ENCODE measurements at regions of chr5 and their contacts with region 1.

Region 1: GRCh38 chr5:102778478-102778877 is 23.4 kb downstream of the PAM start:
- DNase-seq: no peak
- ATAC-seq: no peak
- H3K4me3 ChIP-seq: no peak overlapping the region
- H3K4me3 Mint-ChIP-seq: no peak overlapping the region
- H3K27ac ChIP-seq: no peak overlapping the region
- H3K27ac Mint-ChIP-seq: peak overlapping the region in 1 of 9 donors; percentile 15
- H3K4me1 ChIP-seq: no peaks in the 10 kb centered on the region
- H3K4me1 Mint-ChIP-seq: peaks cover 0 to 41% (median 15%) of the 10 kb centered on the region in 7 donors
- H3K27me3 ChIP-seq: no peaks in the 10 kb centered on the region
- H3K27me3 Mint-ChIP-seq: no peaks in the 10 kb centered on the region

Region 2: GRCh38 chr5:102755686-102756371 is 22.6 kb before region 1 on chr5:
- CTCF ChIA-PET with region 1: interaction called, 4 read pairs
- POLR2A ChIA-PET with region 1: no interaction called
- intact Hi-C with region 1: loop called in 1 of 2 experiments (anchors 1 kb)
- DNase-seq: peak; percentile 22 to 70 (median 39)
- ATAC-seq: peak; percentile 86
- H3K4me3 ChIP-seq: peak overlapping the region; percentile 83
- H3K4me3 Mint-ChIP-seq: peak overlapping the region; percentile 90 to 99 (median 94)
- H3K27ac ChIP-seq: peak overlapping the region; percentile 64
- H3K27ac Mint-ChIP-seq: peak overlapping the region; percentile 57 to 95 (median 91)
- H3K4me1 ChIP-seq: peaks cover 11 to 16% of the 10 kb centered on the region in 2 donors
- H3K4me1 Mint-ChIP-seq: peaks cover 22 to 45% (median 40%) of the 10 kb centered on the region in 7 donors
- H3K27me3 ChIP-seq: no peaks in the 10 kb centered on the region
- H3K27me3 Mint-ChIP-seq: peaks cover 0 to 15% (median under 1%) of the 10 kb centered on the region in 5 donors

Region 3: DNA sequence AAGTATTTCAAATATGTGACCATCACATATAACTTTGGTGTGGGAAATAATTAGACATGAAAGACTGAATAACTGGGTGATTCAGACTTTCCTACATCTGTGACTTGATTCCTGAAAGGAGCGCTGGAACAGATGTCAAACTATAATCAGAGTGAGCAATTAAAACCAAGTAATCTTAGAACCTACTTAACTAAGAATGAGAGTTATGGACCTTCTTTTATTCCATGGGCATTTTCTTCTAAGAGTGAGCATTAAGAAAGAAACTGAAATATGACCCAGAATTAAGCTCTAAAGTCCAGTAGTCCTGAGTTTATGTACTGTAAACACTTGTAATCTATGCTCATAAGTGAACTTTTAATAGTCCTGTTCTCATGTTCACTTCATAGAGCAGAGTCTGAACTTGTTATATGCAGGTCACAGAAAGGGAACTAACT is 45.0 kb after region 1 on chr5:
- CTCF ChIA-PET with region 1: no interaction called
- POLR2A ChIA-PET with region 1: no interaction called
- intact Hi-C with region 1: no loop called
- DNase-seq: no peak
- ATAC-seq: no peak
- H3K4me3 ChIP-seq: no peak overlapping the region
- H3K4me3 Mint-ChIP-seq: no peak overlapping the region
- H3K27ac ChIP-seq: no peak overlapping the region
- H3K27ac Mint-ChIP-seq: no peak overlapping the region
- H3K4me1 ChIP-seq: no peaks in the 10 kb centered on the region
- H3K4me1 Mint-ChIP-seq: peaks cover 4 to 11% (median 5%) of the 10 kb centered on the region in 7 donors
- H3K27me3 ChIP-seq: no peaks in the 10 kb centered on the region
- H3K27me3 Mint-ChIP-seq: no peaks in the 10 kb centered on the region

Region 4: DNA sequence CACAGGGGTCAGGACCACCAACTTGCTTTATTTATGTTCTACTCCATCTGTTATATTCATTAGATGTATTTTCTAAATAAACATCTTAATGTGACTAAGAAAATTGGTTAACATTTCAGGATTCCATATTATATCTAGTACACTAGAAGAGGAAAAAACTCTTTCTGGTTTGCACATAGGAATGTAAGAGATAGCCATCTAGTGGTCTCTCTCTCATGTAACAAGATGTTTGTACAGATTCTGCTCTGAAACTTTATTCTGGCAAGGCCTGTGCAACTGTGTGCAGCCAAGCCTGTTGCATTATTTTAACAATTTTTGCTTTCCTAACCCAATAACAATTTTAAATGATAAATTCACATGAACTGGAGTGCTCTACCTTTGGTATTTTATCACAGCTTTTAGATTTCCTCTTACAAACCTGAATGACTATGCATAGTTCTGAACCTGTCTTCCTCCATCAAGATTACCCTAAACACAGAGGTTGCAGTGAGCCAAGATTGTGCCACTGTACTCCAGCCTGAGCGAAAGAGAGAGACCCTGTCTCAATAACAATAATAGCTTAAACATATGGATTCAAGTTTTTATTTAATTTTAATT is 193.3 kb after region 1 on chr5:
- CTCF ChIA-PET with region 1: no interaction called
- POLR2A ChIA-PET with region 1: no interaction called
- intact Hi-C with region 1: loop called (anchors 1 to 5 kb)
- DNase-seq: peak in 1 of 9 donors; percentile 9
- ATAC-seq: no peak
- H3K4me3 ChIP-seq: no peak overlapping the region
- H3K4me3 Mint-ChIP-seq: no peak overlapping the region
- H3K27ac ChIP-seq: no peak overlapping the region
- H3K27ac Mint-ChIP-seq: no peak overlapping the region
- H3K4me1 ChIP-seq: no peaks in the 10 kb centered on the region
- H3K4me1 Mint-ChIP-seq: peaks cover 0 to 5% (median 0%) of the 10 kb centered on the region in 7 donors
- H3K27me3 ChIP-seq: no peaks in the 10 kb centered on the region
- H3K27me3 Mint-ChIP-seq: no peaks in the 10 kb centered on the region

Region 5: DNA sequence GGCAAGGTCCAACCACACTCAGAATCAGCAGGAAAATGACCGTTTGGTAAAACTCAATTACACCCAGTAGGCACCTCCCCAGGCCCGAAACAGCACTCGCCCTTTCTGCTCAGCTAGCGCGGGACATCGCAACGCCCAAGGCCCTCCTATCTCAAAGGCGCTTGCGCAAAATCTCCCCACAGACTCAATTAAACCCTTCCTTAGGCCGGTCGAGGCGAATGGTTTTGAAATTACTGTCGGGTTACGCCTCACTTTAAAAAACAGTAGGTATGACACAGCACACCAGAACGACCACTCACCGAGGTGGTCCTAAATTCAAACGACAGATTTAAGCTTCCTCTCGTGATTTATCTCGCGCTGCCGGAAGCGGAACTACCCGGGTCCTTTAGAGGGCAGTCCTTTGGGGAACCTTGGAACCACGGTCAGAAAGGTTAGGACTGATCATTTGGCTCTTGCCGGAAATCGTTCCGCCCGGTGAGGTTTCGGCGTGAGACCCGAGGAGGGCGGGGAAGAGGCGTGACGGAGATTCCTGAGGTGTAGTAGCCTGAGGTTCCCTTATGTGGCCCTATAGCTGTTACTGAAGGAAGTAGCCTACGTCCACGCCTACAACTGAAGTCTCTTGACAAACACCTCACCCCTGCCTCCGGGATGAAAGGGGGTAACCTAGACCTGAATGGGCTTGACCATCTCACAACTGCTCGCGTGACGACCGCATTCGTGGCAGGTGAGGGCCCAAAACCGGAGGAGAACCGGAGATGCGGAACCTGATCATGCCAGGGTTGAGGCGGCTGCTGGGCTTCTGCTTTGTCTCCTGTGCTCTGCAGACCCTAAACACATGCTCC is 341.5 kb after region 1 on chr5 and contains the starts of genes GIN1 and PPIP5K2:
- CTCF ChIA-PET with region 1: interaction called, 4 read pairs
- POLR2A ChIA-PET with region 1: no interaction called
- intact Hi-C with region 1: loop called in 1 of 2 experiments (anchors 5 kb)
- DNase-seq: peak; percentile 91 to 98 (median 97)
- ATAC-seq: peak; percentile 96
- H3K4me3 ChIP-seq: peak within 1 kb of the TSS; percentile 92
- H3K4me3 Mint-ChIP-seq: peak within 1 kb of the TSS; percentile 89 to 100 (median 96)
- H3K27ac ChIP-seq: peak within 1 kb of the TSS; percentile 90
- H3K27ac Mint-ChIP-seq: peak within 1 kb of the TSS; percentile 92 to 100 (median 96)
- H3K4me1 ChIP-seq: peaks cover 9 to 29% of the 10 kb centered on the region in 2 donors
- H3K4me1 Mint-ChIP-seq: peaks cover 24 to 74% (median 65%) of the 10 kb centered on the region in 7 donors
- H3K27me3 ChIP-seq: no peaks in the 10 kb centered on the region
- H3K27me3 Mint-ChIP-seq: no peaks in the 10 kb centered on the region
- total RNA-seq, gene GIN1: 4.0 to 20.9 (median 9.6) TPM
- total RNA-seq, gene PPIP5K2: 59.4 to 77.4 (median 69.3) TPM